GM12878 (cell line): ENCODE measurements at regions of chr9 and their contacts with region 1.

Region 1: DNA sequence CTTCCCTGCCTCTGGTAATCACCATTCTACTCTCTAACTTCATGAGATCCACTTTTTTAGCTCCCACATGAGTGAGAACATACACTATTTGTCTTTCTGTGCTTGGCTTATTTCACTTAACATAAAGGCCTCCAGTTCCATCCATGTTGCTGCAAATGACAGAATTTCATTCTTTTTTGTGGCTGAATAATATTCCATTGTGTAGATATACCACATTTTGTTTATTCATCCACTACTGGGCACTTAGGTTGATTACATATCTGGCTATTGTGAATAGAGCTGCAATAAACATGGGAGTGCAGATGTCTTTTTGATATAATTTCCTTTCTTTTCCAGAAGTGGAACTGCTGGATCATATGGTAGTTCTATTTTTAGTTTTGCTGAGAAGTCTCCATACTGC is 28.7 kb downstream of the SHOC1 start:
- DNase-seq: no peak
- ATAC-seq: no peak
- H3K4me3 ChIP-seq: no peak overlapping the region
- H3K27ac ChIP-seq: no peak overlapping the region
- H3K4me1 ChIP-seq: no peaks in the 10 kb centered on the region
- H3K27me3 ChIP-seq: no peaks in the 10 kb centered on the region
- CTCF ChIP-seq: no peak
- EP300 ChIP-seq: no peak
- POLR2A ChIP-seq: no peak
- RAD21 ChIP-seq: no peak

Region 2: GRCh38 chr9:111715471-111715870 is 50.6 kb before region 1 on chr9:
- CTCF ChIA-PET with region 1: no interaction called
- POLR2A ChIA-PET with region 1: no interaction called
- RAD21 ChIA-PET with region 1: no interaction called
- SMC1A ChIA-PET with region 1: no interaction called
- in situ Hi-C with region 1: loop called (anchors 5 kb)
- intact Hi-C with region 1: no loop called
- DNase-seq: no peak
- ATAC-seq: no peak
- H3K4me3 ChIP-seq: no peak overlapping the region
- H3K27ac ChIP-seq: no peak overlapping the region
- H3K4me1 ChIP-seq: no peaks in the 10 kb centered on the region
- H3K27me3 ChIP-seq: no peaks in the 10 kb centered on the region
- CTCF ChIP-seq: no peak
- EP300 ChIP-seq: no peak
- POLR2A ChIP-seq: no peak
- RAD21 ChIP-seq: no peak